GM12878 (cell line): ENCODE measurements at regions of chr3 and their contacts with region 1.

Region 1: DNA sequence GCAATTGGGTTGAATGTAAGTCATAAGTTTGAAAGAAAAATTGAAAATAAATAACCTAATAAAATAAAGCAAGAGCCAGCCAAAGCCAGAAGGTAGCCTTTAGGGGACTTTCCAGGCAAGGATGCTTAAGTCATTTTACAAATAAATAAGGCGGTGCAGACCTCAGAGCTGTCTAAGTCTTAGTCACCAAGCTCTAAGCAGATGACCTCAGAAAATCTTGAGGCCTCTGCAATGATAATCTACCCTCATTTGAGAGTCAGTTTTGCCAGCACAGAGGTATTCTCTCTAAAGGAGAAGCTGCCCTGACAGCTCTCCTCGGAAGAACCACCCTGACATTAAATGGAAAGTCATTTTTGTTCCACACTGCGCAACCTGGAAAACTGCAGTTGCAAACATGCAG is 113.9 kb downstream of the OXNAD1 start:
- DNase-seq: no peak
- ATAC-seq: peak; percentile 70
- H3K4me3 ChIP-seq: no peak overlapping the region
- H3K27ac ChIP-seq: peak overlapping the region; percentile 88
- H3K4me1 ChIP-seq: peaks cover 93% of the 10 kb centered on the region
- H3K27me3 ChIP-seq: no peaks in the 10 kb centered on the region
- CTCF ChIP-seq: no peak
- EP300 ChIP-seq: peak in 1 of 2 experiments; percentile 82; a peak in 2 of 4 replicates
- POLR2A ChIP-seq: 0 out of 2 replicates have a peak, but pooled peaks have one; percentile 34
- RAD21 ChIP-seq: no peak

Region 2: GRCh38 chr3:16329036-16329825 is 49.7 kb before region 1 on chr3:
- CTCF ChIA-PET with region 1: no interaction called
- POLR2A ChIA-PET with region 1: no interaction called
- RAD21 ChIA-PET with region 1: no interaction called
- SMC1A ChIA-PET with region 1: no interaction called
- in situ Hi-C with region 1: no loop called
- intact Hi-C with region 1: no loop called
- DNase-seq: no peak
- ATAC-seq: no peak
- H3K4me3 ChIP-seq: no peak overlapping the region
- H3K27ac ChIP-seq: no peak overlapping the region
- H3K4me1 ChIP-seq: no peaks in the 10 kb centered on the region
- H3K27me3 ChIP-seq: no peaks in the 10 kb centered on the region
- CTCF ChIP-seq: no peak
- EP300 ChIP-seq: no peak
- POLR2A ChIP-seq: peak; percentile 43; the same call in 1 of the 2 replicates
- RAD21 ChIP-seq: no peak

Region 3: DNA sequence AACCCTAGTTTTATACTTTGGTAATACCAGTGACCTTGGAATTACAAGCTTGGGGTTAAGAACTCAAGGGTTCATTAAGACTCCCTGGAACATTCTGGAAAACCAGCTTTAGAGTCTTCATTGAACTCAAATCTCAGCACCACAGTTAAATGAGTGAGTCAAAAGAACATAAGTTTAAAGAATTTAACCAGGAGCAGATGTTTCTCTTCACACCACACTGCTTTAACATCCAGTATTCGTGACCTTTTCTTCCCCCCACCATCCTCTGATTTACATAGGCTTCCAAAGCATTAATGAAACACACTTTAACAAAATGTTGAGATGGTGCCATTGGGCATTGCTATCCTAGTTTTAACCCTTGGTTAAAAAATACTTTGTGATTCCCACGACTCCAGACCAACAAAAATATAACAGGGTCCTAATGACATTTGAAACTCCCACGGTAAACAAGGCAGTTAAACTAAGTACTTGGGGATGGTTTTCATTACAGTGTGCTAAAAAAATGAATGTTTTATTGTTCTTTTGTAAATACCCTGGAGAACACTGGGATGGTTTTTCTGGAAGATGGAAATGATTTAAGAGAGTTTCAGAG is 10.0 kb after region 1 on chr3:
- CTCF ChIA-PET with region 1: interaction called, 8 read pairs
- POLR2A ChIA-PET with region 1: interaction called, 8 read pairs
- RAD21 ChIA-PET with region 1: interaction called, 10 read pairs
- SMC1A ChIA-PET with region 1: interaction called, 89 read pairs
- in situ Hi-C with region 1: no loop called
- intact Hi-C with region 1: no loop called
- DNase-seq: no peak
- ATAC-seq: no peak
- H3K4me3 ChIP-seq: no peak overlapping the region
- H3K27ac ChIP-seq: peak overlapping the region; percentile 32; the same call in 1 of the 2 replicates
- H3K4me1 ChIP-seq: peaks cover 23% of the 10 kb centered on the region
- H3K27me3 ChIP-seq: no peaks in the 10 kb centered on the region
- CTCF ChIP-seq: no peak
- EP300 ChIP-seq: no peak
- POLR2A ChIP-seq: no peak
- RAD21 ChIP-seq: no peak

Region 4: DNA sequence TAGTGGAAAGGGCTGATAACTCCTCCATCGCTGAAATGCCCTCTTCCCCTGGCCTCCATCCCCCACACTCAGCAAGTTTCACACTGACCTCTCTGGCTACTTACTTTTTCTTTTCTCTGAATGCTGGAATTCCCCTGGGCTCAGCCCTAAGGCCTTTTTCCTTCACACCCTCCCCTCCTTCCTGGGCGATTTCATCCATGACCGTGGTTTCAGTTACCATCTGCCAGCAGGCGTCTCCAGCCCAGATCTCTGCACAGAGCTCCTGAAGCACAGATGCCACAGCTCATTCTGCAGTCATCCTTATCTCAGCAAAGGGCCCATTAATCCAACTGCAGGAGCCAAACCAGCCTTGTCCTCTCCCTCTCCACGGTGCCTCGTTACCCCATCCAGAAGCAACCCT is 20.6 kb after region 1 on chr3:
- CTCF ChIA-PET with region 1: interaction called, 6 read pairs
- POLR2A ChIA-PET with region 1: interaction called, 15 read pairs
- RAD21 ChIA-PET with region 1: interaction called, 10 read pairs
- SMC1A ChIA-PET with region 1: interaction called, 89 read pairs
- in situ Hi-C with region 1: no loop called
- intact Hi-C with region 1: no loop called
- DNase-seq: no peak
- ATAC-seq: peak; percentile 75
- H3K4me3 ChIP-seq: no peak overlapping the region
- H3K27ac ChIP-seq: peak overlapping the region; percentile 60
- H3K4me1 ChIP-seq: peaks cover 13% of the 10 kb centered on the region
- H3K27me3 ChIP-seq: no peaks in the 10 kb centered on the region
- CTCF ChIP-seq: peak in 2 of 3 experiments; percentile 7 to 21; a peak in 2 of 6 replicates
- EP300 ChIP-seq: no peak
- POLR2A ChIP-seq: no peak
- RAD21 ChIP-seq: no peak

Region 5: DNA sequence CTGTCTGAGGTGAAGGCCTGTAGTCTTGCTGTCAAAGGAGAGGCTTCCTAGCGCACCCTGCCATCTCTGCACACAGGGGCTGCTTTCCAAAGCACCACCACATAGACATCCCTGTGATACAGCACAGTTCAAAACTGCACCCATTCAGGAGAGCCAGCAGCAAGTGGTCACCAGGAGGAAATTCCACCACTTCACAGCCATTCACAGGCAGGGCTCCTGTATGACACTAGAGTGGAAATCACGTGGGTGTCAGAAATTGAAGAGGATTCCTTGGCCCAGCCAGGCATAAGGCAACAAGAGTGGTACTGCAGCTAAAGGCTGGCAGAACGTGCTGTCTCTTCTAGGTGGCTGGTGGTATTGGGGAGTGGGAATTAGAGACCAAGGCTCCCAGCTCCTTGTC is 31.7 kb after region 1 on chr3:
- CTCF ChIA-PET with region 1: interaction called, 4 read pairs
- POLR2A ChIA-PET with region 1: interaction called, 13 read pairs
- RAD21 ChIA-PET with region 1: interaction called, 8 read pairs
- SMC1A ChIA-PET with region 1: interaction called, 24 read pairs
- in situ Hi-C with region 1: no loop called
- intact Hi-C with region 1: no loop called
- DNase-seq: no peak
- ATAC-seq: no peak
- H3K4me3 ChIP-seq: no peak overlapping the region
- H3K27ac ChIP-seq: peak overlapping the region; percentile 37; the same call in 1 of the 2 replicates
- H3K4me1 ChIP-seq: peaks cover 47% of the 10 kb centered on the region
- H3K27me3 ChIP-seq: no peaks in the 10 kb centered on the region
- CTCF ChIP-seq: no peak
- EP300 ChIP-seq: no peak
- POLR2A ChIP-seq: no peak
- RAD21 ChIP-seq: no peak

Region 6: DNA sequence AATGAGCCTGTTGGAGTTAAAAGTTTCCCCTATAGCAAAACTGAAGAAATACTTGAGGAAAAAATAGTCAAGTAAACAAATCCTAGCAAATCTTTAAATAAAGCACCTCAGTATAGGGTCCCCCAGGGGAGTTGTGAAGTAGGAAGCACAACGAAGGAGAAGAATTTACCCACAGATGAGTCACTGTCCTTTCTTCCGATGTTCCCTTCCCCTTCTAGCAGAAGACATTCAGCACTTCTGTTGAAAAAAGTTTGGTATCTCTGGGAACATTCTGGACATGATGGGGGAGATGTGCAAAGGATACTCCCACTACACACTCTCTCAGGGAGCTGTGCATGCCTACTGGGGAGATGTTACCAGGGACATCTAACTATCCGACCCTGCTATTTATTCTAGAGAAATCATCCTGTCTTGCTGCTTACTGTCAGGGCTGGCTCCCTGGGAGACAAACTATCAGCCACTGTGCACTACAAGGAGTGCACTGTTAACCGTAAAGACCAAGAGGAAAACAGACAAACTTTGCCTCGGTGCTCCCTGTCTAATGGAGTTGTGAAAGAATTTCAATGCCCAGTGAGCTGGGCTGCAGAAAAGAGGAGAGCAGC is 40.8 kb after region 1 on chr3:
- CTCF ChIA-PET with region 1: interaction called, 8 read pairs
- POLR2A ChIA-PET with region 1: interaction called, 11 read pairs
- RAD21 ChIA-PET with region 1: interaction called, 11 read pairs
- SMC1A ChIA-PET with region 1: interaction called, 19 read pairs
- in situ Hi-C with region 1: no loop called
- intact Hi-C with region 1: no loop called
- DNase-seq: no peak
- ATAC-seq: peak; percentile 4
- H3K4me3 ChIP-seq: no peak overlapping the region
- H3K27ac ChIP-seq: peak overlapping the region; percentile 46; the same call in 1 of the 2 replicates
- H3K4me1 ChIP-seq: peaks cover 24% of the 10 kb centered on the region
- H3K27me3 ChIP-seq: no peaks in the 10 kb centered on the region
- CTCF ChIP-seq: no peak
- EP300 ChIP-seq: no peak
- POLR2A ChIP-seq: no peak
- RAD21 ChIP-seq: no peak

Region 7: GRCh38 chr3:16496408-16497222 is 117.7 kb after region 1 on chr3:
- CTCF ChIA-PET with region 1: no interaction called
- POLR2A ChIA-PET with region 1: interaction called, 6 read pairs
- RAD21 ChIA-PET with region 1: interaction called, 17 read pairs
- SMC1A ChIA-PET with region 1: interaction called, 8 read pairs
- in situ Hi-C with region 1: no loop called
- intact Hi-C with region 1: no loop called
- DNase-seq: peak; percentile 60
- ATAC-seq: peak; percentile 73
- H3K4me3 ChIP-seq: no peak overlapping the region
- H3K27ac ChIP-seq: peak overlapping the region; percentile 29; the same call in 1 of the 2 replicates
- H3K4me1 ChIP-seq: peaks cover 48% of the 10 kb centered on the region
- H3K27me3 ChIP-seq: no peaks in the 10 kb centered on the region
- CTCF ChIP-seq: no peak
- EP300 ChIP-seq: no peak
- POLR2A ChIP-seq: no peak
- RAD21 ChIP-seq: no peak